WTC11 (cell line): ENCODE measurements at regions of chr5 and their contacts with region 1.

Region 1: GRCh38 chr5:83354958-83355357 is 116.6 kb upstream of the VCAN start:
- DNase-seq: peak; percentile 39
- ATAC-seq: peak; percentile 96
- H3K4me3 Mint-ChIP-seq: peak overlapping the region; percentile 43
- H3K27ac Mint-ChIP-seq: peak overlapping the region; percentile 96
- H3K4me1 Mint-ChIP-seq: peaks cover 57% of the 10 kb centered on the region
- H3K27me3 Mint-ChIP-seq: no peaks in the 10 kb centered on the region
- CTCF ChIP-seq: no peak

Region 2: DNA sequence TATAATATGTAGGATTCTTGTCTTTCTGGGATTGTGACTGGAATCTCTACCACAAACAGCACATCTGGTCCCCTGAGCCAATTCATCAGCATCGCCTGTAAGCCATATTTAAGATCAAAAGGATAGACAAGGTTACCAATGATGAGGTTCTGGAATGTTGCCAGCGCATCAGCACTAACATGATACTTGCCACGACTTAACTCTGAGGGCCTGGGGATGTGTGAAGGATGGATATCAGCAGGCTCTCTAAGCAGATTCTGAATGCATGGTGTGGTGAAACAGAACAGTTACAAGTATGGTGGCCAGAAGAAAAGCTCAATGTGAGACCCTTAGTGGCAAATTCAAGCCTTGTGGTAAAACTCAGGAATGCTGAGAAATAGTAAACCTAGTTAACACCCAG is 134.6 kb before region 1 on chr5:
- CTCF ChIA-PET with region 1: no interaction called
- POLR2A ChIA-PET with region 1: interaction called, 11 read pairs
- DNase-seq: no peak
- ATAC-seq: no peak
- H3K4me3 Mint-ChIP-seq: no peak overlapping the region
- H3K27ac Mint-ChIP-seq: no peak overlapping the region
- H3K4me1 Mint-ChIP-seq: peaks cover 17% of the 10 kb centered on the region
- H3K27me3 Mint-ChIP-seq: no peaks in the 10 kb centered on the region
- CTCF ChIP-seq: no peak

Region 3: DNA sequence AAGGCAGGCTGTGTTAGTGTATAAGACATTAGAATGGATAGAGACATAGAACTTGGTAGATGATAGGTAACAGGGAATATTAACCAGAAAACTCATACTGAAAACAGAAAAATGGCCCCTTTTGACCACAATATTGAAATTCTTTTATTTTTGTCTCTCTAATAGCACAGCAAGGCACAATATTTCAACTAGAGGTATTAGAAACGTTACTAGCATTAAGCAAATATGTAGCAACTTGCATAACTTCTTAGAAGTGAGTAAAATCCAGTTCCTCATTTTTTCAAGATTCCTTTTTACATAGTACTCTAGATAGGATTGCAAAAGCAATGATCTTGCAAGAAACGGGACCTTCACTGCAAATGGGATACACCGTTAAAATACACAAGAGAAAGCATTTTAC is 13.9 kb after region 1 on chr5:
- CTCF ChIA-PET with region 1: no interaction called
- POLR2A ChIA-PET with region 1: no interaction called
- DNase-seq: no peak
- ATAC-seq: no peak
- H3K4me3 Mint-ChIP-seq: no peak overlapping the region
- H3K27ac Mint-ChIP-seq: no peak overlapping the region
- H3K4me1 Mint-ChIP-seq: peaks cover 6% of the 10 kb centered on the region
- H3K27me3 Mint-ChIP-seq: no peaks in the 10 kb centered on the region
- CTCF ChIP-seq: no peak